Upper lobe of right lung (tissue), 1 donor: ENCODE measurements at regions of chr9 and their contacts with region 1.

Region 1: DNA sequence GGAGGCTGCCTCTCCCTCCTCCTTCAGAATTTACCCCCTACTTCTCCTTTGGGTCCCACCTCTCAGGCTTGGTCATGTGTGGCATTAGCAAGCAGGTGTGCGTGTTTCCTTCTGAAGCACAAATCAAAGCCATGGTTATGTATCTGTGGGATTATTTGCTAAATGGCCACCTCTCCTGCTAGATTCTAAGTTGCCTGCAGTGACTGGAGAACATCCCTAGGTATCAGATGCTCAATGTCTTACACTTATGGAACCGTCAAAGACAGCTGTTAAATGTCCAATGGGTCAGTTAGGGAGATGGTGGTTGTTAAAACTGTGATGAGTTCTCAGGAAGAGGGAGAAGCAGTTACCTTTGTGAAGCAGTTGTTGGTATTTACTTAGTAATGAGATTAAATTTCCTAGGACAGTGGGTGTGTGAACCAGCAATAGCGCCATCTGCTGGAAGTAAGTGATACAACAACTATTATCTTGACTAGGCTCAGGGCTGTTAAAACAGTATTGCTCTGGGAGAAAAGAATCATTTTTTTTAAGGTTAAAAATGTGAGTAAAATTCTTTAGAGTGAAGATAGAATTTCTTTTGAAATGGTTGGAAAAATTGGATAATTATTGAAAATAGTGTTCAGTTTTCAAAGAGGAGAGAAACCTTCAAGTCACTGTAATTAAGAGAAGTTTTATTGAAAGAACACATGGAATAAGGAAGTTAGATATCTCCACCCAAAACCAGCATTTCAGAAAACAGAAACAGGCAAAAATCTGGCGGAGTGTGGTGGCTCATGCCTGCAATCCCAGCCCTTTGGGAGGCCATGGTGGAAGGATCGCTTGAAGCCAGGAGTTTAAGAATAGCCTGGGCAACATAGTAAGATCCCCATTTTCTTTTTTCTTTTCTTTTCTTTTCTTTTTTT is 71.3 kb downstream of the TMC1 start:
- DNase-seq: no peak
- ATAC-seq: peak; percentile 89
- H3K4me3 ChIP-seq: no peak overlapping the region
- H3K27ac ChIP-seq: no peak overlapping the region
- H3K4me1 ChIP-seq: peaks cover 9% of the 10 kb centered on the region
- H3K27me3 ChIP-seq: no peaks in the 10 kb centered on the region
- CTCF ChIP-seq: peak; percentile 83

Region 2: DNA sequence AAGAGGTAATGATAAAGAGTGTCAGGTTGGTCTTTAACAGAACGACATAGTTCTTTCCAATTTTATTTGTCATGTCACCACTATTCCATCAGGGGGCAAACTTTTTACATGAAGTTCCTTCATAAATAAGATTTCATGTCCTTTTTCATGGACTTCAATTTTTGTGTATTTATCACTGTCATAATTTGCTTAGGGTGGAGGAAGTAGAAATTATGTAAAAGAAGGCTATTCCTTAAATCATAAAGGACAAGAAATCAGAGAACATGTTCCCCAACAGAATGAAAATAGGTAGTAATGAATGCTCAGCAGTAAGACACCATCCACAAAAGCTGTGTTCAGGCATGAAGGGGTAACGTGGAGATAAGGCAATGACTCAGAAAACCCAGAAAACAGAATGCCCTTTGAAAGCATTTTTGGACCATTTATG is 300.5 kb before region 1 on chr9:
- intact Hi-C with region 1: loop called (anchors 5 kb)
- DNase-seq: no peak
- ATAC-seq: peak; percentile 63
- H3K4me3 ChIP-seq: no peak overlapping the region
- H3K27ac ChIP-seq: peak overlapping the region; percentile 69
- H3K4me1 ChIP-seq: peaks cover 8% of the 10 kb centered on the region
- H3K27me3 ChIP-seq: no peaks in the 10 kb centered on the region
- CTCF ChIP-seq: peak; percentile 70

Region 3: DNA sequence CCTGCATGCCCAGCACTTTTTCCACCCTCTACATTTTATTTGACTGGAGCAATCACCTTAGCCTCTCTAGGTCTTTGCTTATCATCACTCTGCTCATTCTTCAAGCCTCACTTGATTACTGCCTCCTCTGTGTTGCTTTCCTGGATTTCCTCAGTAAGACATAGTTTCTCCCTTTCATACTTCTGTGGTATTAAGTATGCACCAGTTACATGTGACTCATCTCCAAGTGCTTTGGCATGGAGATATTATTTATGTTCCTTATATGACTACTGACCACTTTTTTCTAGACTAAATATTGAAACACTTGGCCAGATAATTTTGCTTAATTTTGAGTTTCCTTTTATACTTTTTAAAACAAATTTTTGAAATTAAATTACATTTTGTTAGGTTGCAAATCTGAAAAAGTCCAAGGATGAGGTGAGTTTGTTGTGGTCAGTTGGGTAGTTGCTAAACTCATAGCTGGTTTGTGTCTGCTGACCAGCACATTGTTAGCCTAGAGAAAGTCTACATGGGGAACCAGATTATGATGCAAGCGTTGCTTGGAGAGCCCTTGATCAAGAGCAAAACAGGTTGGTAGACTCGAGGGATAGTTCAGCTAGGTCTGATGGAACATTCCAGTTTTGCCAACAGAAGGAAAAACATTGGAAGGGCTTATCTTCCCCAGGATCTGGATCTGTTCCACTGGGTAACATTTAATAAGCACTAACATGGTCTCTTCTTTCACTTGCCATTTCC is 68.8 kb after region 1 on chr9:
- intact Hi-C with region 1: no loop called
- DNase-seq: no peak
- ATAC-seq: peak; percentile 62
- H3K4me3 ChIP-seq: no peak overlapping the region
- H3K27ac ChIP-seq: no peak overlapping the region
- H3K4me1 ChIP-seq: no peaks in the 10 kb centered on the region
- H3K27me3 ChIP-seq: no peaks in the 10 kb centered on the region
- CTCF ChIP-seq: no peak